ENCODE measurements at regions of chr11 and their contacts with region 1.

Region 1: DNA sequence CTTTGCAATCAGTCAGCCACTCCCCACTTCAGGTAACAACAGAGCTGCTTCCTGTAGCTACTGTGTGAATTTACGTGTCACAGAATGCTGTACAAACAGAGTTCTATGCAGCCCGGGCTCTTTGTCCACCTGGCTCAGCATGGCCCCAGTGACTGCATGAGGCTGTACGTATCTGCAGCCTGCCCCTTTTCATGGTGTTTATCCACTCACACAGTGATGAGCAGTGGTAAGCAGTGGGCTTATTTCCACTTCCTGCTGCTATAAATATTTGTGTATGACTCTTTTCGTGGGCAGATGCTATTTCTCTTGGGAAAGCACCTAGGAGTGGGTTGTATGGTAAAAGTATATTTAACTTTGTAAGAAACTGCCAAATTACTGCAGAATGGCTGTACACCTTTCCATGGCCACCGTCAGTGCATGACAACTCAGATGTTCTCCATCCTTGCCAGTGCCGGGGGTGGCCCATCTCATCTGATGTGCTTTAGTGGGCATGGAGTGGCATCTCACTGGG is 43.3 kb downstream of the MYEOV start:
- DNase-seq: peak in 6 of 14 experiments; percentile 8 to 54 (median 28)
- ATAC-seq: peak; percentile 75
- H3K4me3 ChIP-seq: peak overlapping the region; percentile 14
- H3K4me3 Mint-ChIP-seq: peak overlapping the region; percentile 16
- H3K27ac ChIP-seq: peak overlapping the region; percentile 49 to 65
- H3K27ac Mint-ChIP-seq: peak overlapping the region; percentile 87
- H3K4me1 ChIP-seq: peaks cover 35% of the 10 kb centered on the region
- H3K4me1 Mint-ChIP-seq: peaks cover 25% of the 10 kb centered on the region
- H3K27me3 ChIP-seq: no peaks in the 10 kb centered on the region
- H3K27me3 Mint-ChIP-seq: no peaks in the 10 kb centered on the region
- CTCF ChIP-seq: no peak

Region 2: GRCh38 chr11:69311767-69312385 is 25.4 kb before region 1 on chr11:
- CTCF ChIA-PET with region 1: no interaction called
- POLR2A ChIA-PET with region 1: interaction called, 10 read pairs
- intact Hi-C with region 1: no loop called
- DNase-seq: peak in 5 of 14 experiments; percentile 20 to 55 (median 52)
- ATAC-seq: peak; percentile 69
- H3K4me3 ChIP-seq: peak overlapping the region; percentile 11
- H3K4me3 Mint-ChIP-seq: peak overlapping the region; percentile 63
- H3K27ac ChIP-seq: peak overlapping the region in 1 of 2 donors; percentile 52
- H3K27ac Mint-ChIP-seq: peak overlapping the region; percentile 77
- H3K4me1 ChIP-seq: peaks cover 34% of the 10 kb centered on the region
- H3K4me1 Mint-ChIP-seq: peaks cover 47% of the 10 kb centered on the region
- H3K27me3 ChIP-seq: no peaks in the 10 kb centered on the region
- H3K27me3 Mint-ChIP-seq: no peaks in the 10 kb centered on the region
- CTCF ChIP-seq: no peak

Region 3: DNA sequence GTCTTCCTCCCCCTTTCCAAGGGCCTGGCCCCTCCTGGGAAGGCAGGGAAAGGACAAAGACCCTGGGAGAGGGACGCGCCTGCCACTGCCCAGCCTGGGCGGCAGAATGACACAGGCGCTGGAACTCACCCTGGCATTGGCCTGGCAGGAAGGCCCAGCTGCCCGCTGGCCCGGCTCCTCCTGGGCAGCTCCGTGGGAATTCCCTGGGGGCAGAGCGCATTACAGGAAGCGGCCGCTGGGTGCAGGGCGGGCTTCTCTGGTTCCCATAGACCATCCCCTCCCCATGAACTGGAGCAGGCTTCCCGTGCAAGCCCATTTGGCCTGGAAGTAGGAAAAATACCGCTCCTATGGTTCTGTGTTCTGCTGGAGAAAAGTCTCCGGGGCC is 202.8 kb after region 1 on chr11:
- CTCF ChIA-PET with region 1: no interaction called
- POLR2A ChIA-PET with region 1: no interaction called
- intact Hi-C with region 1: no loop called
- DNase-seq: no peak
- ATAC-seq: no peak
- H3K4me3 ChIP-seq: no peak overlapping the region
- H3K4me3 Mint-ChIP-seq: no peak overlapping the region
- H3K27ac ChIP-seq: no peak overlapping the region
- H3K27ac Mint-ChIP-seq: no peak overlapping the region
- H3K4me1 ChIP-seq: peaks cover 7% of the 10 kb centered on the region
- H3K4me1 Mint-ChIP-seq: no peaks in the 10 kb centered on the region
- H3K27me3 ChIP-seq: peaks cover 0 to 3% of the 10 kb centered on the region in 2 experiments
- H3K27me3 Mint-ChIP-seq: peaks cover 15% of the 10 kb centered on the region
- CTCF ChIP-seq: no peak

Measured in CD4-positive, alpha-beta T cell (primary cell).